Right ventricle myocardium inferior (tissue), 1 donor: ENCODE measurements at regions of chr4 and their contacts with region 1.

Region 1: GRCh38 chr4:102868781-102869568 is at the start of gene CISD2:
- DNase-seq: peak; percentile 96
- ATAC-seq: peak; percentile 99
- total RNA-seq, gene CISD2: 17.1 TPM

Region 2: DNA sequence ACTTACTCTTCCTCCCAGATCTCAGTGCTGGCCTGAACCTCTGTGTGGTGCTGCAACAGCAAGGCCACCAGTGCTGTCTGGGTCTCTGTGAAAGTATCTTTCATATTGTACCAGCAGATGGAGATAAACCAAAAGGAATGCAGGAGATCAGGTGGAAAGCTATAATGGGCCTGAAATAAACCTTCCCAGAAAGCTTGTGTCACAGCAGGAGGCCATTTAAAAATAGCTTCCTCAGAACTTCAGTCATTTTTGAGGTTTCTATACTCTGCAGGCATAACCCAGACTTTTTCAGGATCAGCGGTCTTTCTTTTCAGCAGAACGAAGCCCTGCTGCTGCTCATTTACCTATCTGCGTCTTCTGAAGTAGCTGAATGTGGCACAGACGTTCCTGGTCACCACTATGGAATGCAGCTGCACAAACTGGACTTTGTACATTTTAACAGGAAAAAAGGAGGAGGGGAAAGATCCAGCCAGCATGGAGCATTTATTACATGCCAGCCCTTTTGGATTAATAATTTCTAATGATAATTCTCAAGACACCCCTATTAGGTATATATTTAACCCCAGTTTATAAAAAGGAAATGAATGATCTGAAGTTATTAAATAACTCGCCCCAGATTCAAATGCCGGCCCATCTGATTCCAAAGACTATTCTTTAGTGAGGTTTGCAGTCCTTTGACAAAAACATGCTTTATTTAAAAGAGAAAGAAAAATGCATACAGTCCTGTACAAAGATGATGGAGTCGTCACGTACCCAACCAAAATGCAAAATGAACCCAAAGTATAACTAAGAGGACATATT is 248.1 kb before region 1 on chr4:
- intact Hi-C with region 1: loop called (anchors 10 kb)
- DNase-seq: no peak
- ATAC-seq: peak; percentile 93

Region 3: GRCh38 chr4:102918859-102919258 is 49.9 kb after region 1 on chr4:
- intact Hi-C with region 1: no loop called
- DNase-seq: no peak
- ATAC-seq: no peak

Region 4: DNA sequence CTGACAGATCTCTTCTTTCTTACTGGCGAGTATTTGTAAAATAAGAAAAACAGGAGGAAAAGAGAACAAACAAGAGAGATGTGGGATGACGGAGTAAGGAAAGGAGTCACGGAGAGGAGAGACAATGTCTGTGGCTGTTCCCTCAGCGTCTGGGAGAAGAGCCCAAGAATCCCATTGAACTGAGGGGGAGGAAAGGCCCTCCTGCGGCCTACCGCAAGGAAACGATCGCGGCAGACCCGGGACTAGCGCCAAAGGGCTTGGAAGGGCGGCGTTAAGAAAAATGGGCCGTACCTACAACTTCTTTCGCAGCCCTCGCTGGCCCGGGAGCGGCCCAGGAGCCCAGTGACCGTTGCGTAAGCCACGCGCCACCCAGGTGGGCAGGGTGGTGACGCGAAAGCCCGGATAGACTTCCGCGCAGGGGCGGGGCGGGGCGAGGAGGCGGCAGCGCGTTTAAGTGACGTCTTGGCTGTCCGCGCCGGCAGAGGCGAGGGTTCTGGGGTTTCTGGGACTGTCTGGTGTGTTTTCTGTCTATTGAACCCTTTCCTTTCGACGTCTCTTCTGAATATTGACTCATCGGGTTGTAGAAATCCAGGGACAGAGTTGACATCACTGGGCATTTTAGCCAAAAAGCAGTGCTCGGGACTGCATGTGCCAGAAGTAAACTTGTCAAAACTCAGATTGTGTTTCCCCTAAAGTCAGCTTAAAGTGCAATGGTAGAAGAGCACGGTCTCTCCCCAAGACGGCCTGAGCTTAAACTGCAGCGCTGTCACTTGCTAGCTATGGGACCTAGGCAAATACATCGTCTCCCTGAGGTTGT is 150.5 kb after region 1 on chr4 and contains the start of gene SLC9B1:
- intact Hi-C with region 1: loop called (anchors 5 kb)
- DNase-seq: peak; percentile 98
- ATAC-seq: peak; percentile 99
- total RNA-seq, gene SLC9B1: 0.95 TPM